ENCODE measurements at regions of chr22 and their contacts with region 1.

Region 1: GRCh38 chr22:38051900-38052862 is 5.0 kb upstream of the PICK1 start:
- DNase-seq: peak; percentile 74
- H3K4me3 ChIP-seq: no peak overlapping the region
- H3K27ac ChIP-seq: no peak overlapping the region
- H3K4me1 ChIP-seq: peaks cover 4% of the 10 kb centered on the region
- H3K27me3 ChIP-seq: peaks cover 0 to 2% of the 10 kb centered on the region in 2 experiments
- CTCF ChIP-seq: peak; percentile 79 to 88
- POLR2A ChIP-seq: no peak

Region 2: DNA sequence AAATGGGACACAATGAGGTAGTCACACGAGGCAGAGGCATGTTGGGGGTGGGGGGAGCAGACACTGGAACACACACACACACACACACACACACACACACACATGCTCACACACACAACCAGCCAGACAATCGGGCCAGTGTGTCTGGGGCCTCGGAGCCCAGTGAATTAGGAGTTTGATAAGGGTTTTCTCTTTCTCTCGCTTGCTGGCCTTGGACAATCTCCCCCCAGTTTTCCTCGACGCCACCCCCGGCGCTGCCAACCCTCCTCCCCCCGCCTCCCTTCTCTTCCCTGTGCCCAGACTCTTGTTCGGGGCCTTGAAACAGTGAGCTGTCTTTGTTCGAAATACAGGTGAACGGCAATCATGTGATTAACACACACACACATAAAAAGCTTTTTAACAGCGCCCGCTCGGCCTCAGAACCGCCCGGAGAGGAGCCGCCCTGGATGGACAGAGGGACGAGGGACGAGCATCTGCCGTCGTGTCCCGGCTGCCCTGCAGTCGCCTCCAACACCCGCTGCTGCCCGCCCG is 66.4 kb before region 1 on chr22:
- CTCF ChIA-PET with region 1: no interaction called
- POLR2A ChIA-PET with region 1: no interaction called
- dilution Hi-C with region 1: no loop called
- intact Hi-C with region 1: no loop called
- DNase-seq: no peak
- H3K4me3 ChIP-seq: no peak overlapping the region
- H3K27ac ChIP-seq: no peak overlapping the region
- H3K4me1 ChIP-seq: no peaks in the 10 kb centered on the region
- H3K27me3 ChIP-seq: no peaks in the 10 kb centered on the region
- CTCF ChIP-seq: no peak
- POLR2A ChIP-seq: no peak

Region 3: DNA sequence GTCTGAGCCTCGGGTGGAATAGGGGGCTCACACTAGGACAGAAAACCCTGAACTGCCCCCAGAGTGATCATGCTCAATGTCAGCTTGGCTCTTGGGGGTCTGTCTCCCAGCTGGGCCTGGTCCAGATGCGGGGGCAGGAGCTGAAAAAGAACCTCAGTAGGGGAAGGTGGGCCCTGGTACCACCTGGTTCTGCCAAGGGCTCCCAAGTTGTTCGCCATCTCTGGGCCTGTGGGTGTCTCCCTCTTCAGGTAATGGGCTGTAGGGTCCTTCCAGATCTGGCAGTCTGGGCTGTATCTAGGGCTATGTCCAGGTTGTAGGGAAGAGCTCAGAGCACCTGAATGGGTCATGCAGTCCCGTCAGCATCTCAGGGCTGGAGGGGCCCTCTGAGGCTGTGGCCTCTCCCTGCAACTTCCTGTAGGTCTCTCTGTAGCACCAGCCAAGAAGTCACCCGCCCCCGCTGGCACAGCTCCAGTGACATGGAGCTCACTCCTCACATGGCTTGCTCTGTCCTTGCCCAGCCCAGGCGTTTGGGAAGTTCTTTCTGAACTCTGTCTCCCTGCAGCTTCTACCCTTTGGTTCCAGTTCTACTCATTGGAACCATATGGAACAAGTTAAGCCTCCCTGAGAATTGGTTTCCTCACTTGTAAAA is 34.8 kb before region 1 on chr22:
- CTCF ChIA-PET with region 1: interaction called, 10 read pairs
- POLR2A ChIA-PET with region 1: no interaction called
- dilution Hi-C with region 1: no loop called
- intact Hi-C with region 1: no loop called
- DNase-seq: peak; percentile 37
- H3K4me3 ChIP-seq: no peak overlapping the region
- H3K27ac ChIP-seq: no peak overlapping the region
- H3K4me1 ChIP-seq: peaks cover 11% of the 10 kb centered on the region
- H3K27me3 ChIP-seq: no peaks in the 10 kb centered on the region
- CTCF ChIP-seq: peak in 1 of 2 donors; percentile 2
- POLR2A ChIP-seq: no peak

Region 4: DNA sequence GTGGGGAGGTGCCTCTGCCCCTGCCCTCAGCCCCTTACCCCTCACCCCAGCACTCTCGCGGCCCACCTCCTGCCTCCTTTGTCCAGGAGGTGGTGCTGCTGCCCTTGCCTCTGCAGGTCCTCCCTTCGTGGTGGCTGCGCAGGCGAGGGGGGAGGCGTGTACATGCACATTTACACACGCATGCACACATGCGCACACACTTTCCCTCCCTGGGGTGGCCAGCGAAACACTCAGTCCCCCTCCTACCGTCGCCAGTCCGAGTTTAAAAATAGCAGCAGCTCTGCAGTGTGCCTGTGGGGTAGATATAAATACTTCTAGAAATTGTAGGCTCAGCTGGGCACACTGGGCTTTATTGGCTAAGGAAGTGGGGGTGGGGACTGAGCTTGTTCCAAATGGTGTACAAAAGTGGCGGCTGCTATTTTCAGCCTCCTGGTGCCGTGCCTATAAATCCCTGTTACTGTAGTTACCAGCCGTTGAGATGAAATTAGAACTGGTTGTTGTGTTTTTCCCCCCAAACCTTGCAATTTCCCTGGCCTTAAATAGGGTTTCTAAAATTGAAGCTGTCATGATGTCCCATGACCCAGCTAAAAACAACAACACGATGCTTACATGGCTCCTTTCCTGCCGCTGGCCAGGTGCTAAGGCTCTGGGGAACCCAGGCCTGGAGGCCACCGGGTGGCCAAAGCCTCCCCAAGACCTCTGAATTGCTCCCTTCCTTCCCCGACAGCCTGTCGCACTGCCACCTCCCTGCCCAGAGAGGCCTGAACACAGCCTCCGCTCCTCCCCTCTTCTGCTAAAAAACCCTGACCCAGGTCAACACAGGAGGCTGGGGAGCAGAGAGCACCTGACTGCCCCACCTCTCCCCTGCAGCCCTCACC is 17.4 kb after region 1 on chr22:
- CTCF ChIA-PET with region 1: interaction called, 16 read pairs
- POLR2A ChIA-PET with region 1: no interaction called
- dilution Hi-C with region 1: no loop called
- intact Hi-C with region 1: no loop called
- DNase-seq: peak; percentile 25
- H3K4me3 ChIP-seq: no peak overlapping the region
- H3K27ac ChIP-seq: no peak overlapping the region
- H3K4me1 ChIP-seq: no peaks in the 10 kb centered on the region
- H3K27me3 ChIP-seq: no peaks in the 10 kb centered on the region
- CTCF ChIP-seq: peak; percentile 17 to 55
- POLR2A ChIP-seq: no peak

Region 5: GRCh38 chr22:38148245-38148644 is 96.1 kb after region 1 on chr22:
- CTCF ChIA-PET with region 1: no interaction called
- POLR2A ChIA-PET with region 1: no interaction called
- dilution Hi-C with region 1: no loop called
- intact Hi-C with region 1: no loop called
- DNase-seq: no peak
- H3K4me3 ChIP-seq: no peak overlapping the region
- H3K27ac ChIP-seq: no peak overlapping the region
- H3K4me1 ChIP-seq: peaks cover 6% of the 10 kb centered on the region
- H3K27me3 ChIP-seq: no peaks in the 10 kb centered on the region
- CTCF ChIP-seq: no peak
- POLR2A ChIP-seq: no peak

Region 6: DNA sequence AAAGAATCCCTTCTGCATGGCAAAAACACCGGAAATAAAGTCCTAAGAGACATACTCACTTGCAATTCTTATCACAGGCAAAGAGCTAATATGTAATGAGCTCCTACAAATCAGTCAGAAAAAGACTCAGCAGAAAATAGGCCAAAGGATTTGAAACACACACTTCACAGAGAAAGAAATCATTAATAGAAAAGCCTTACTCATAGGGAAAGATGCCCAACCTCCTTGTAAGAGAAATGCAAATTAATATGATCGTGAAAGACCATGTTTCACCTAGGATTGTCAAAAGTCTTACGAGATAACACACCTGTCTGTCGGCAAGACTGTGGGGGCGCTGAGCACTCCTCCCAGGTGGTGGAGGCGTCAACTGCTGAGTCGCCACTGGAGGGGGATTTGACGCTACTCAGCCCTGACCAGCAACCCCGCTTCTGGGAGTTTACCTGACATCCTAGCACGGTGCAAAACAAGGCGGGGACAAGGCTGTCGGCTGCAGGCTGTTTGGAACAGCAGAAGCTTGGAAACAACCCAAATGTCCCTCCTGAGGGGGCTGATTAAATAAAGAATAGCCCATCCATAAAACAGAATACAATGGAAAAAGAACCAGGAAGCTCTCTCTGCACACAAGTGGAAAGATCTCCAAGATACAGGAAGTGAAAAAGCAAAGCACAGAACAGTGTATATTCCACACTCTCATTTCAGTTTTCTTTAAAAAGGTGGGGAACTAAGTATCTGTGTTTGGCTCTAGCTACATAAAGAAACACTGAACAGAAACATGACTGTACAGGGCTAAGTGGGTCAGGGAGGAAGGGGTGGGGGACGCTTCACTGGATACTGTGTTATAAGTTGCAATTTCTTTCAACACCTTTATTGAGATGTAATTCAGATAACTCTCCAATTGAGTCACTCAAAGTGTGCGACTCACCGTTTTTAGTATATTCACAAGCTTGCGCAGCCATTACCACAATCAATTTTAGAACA is 253.6 kb after region 1 on chr22:
- CTCF ChIA-PET with region 1: interaction called, 13 read pairs
- POLR2A ChIA-PET with region 1: interaction called, 5 read pairs
- dilution Hi-C with region 1: no loop called
- intact Hi-C with region 1: loop called (anchors 10 kb)
- DNase-seq: peak; percentile 67
- H3K4me3 ChIP-seq: no peak overlapping the region
- H3K27ac ChIP-seq: peak overlapping the region; percentile 33
- H3K4me1 ChIP-seq: peaks cover 14% of the 10 kb centered on the region
- H3K27me3 ChIP-seq: no peaks in the 10 kb centered on the region
- CTCF ChIP-seq: peak in 1 of 2 donors; percentile 3
- POLR2A ChIP-seq: no peak

Region 7: GRCh38 chr22:38353142-38353629 is 301.0 kb after region 1 on chr22:
- CTCF ChIA-PET with region 1: interaction called, 29 read pairs
- POLR2A ChIA-PET with region 1: no interaction called
- dilution Hi-C with region 1: no loop called
- intact Hi-C with region 1: loop called (anchors 1 kb)
- DNase-seq: peak; percentile 48
- H3K4me3 ChIP-seq: no peak overlapping the region
- H3K27ac ChIP-seq: no peak overlapping the region
- H3K4me1 ChIP-seq: no peaks in the 10 kb centered on the region
- H3K27me3 ChIP-seq: no peaks in the 10 kb centered on the region
- CTCF ChIP-seq: peak; percentile 93 to 99
- POLR2A ChIP-seq: no peak

Region 8: DNA sequence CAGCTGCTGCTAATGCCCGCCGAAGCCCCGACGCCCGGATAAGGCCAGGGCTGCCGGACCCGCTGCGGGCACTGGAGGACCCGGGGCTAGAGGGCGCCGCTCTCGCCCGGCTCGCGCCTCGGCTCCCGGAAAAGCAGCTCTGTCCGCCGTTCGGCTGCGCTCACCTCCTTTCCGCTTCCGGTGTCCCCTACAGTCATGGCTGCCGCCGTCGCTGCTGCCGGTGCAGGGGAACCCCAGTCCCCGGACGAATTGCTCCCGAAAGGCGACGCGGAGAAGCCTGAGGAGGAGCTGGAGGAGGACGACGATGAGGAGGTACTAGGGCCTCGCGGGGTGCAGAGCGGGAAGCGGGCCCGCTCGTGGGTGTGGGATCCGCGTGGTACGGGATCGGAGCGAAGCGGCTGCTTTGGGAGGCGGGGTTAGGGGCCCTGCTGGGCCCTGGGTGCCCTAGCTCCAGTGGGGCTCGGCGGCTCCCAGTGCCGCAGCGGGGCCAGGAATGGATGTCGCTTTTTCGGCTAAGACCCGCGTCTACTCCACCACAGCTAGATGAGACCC is 629.7 kb after region 1 on chr22 and contains the start of gene TOMM22:
- CTCF ChIA-PET with region 1: interaction called, 7 read pairs
- POLR2A ChIA-PET with region 1: no interaction called
- dilution Hi-C with region 1: no loop called
- intact Hi-C with region 1: loop called (anchors 5 kb)
- DNase-seq: peak; percentile 88
- H3K4me3 ChIP-seq: peak within 1 kb of the TSS; percentile 86 to 98 (median 92)
- H3K27ac ChIP-seq: peak within 1 kb of the TSS; percentile 64
- H3K4me1 ChIP-seq: peaks cover 11% of the 10 kb centered on the region
- H3K27me3 ChIP-seq: no peaks in the 10 kb centered on the region
- CTCF ChIP-seq: peak; percentile 72 to 81
- POLR2A ChIP-seq: peak; percentile 65
- total RNA-seq, gene TOMM22: 98.6 and 98.8 TPM in 2 replicates